ENCODE measurements at regions of chr11 and their contacts with region 1.

Region 1: GRCh38 chr11:72102946-72103753 is at the start of gene LAMTOR1:
- DNase-seq: peak; percentile 100
- H3K4me3 Mint-ChIP-seq: peak within 1 kb of the TSS; percentile 98
- H3K27ac Mint-ChIP-seq: peak within 1 kb of the TSS; percentile 94
- H3K4me1 Mint-ChIP-seq: peaks cover 38% of the 10 kb centered on the region
- H3K27me3 Mint-ChIP-seq: no peaks in the 10 kb centered on the region
- total RNA-seq, gene LAMTOR1: 78.6 and 81.4 TPM in 2 replicates

Region 2: GRCh38 chr11:72040726-72041441 is 62.3 kb before region 1 on chr11:
- intact Hi-C with region 1: loop called (anchors 1 kb)
- DNase-seq: peak; percentile 90
- H3K4me3 Mint-ChIP-seq: no peak overlapping the region
- H3K27ac Mint-ChIP-seq: no peak overlapping the region
- H3K4me1 Mint-ChIP-seq: peaks cover 37% of the 10 kb centered on the region
- H3K27me3 Mint-ChIP-seq: no peaks in the 10 kb centered on the region

Region 3: GRCh38 chr11:72141066-72141465 is 37.9 kb after region 1 on chr11:
- intact Hi-C with region 1: loop called (anchors 5 kb)
- DNase-seq: peak; percentile 70
- H3K4me3 Mint-ChIP-seq: peak overlapping the region; percentile 18
- H3K27ac Mint-ChIP-seq: peak overlapping the region; percentile 60
- H3K4me1 Mint-ChIP-seq: peaks cover 27% of the 10 kb centered on the region
- H3K27me3 Mint-ChIP-seq: peaks cover 2% of the 10 kb centered on the region

Measured in activated CD4-positive, alpha-beta T cell treated with anti-CD3 and anti-CD28 coated beads, Interleukin-2, amount 10 ng/mL, durations not matched to agents 24 days and 14 days (primary cell).